ENCODE measurements at regions of chr10 and their contacts with region 1.

Region 1: GRCh38 chr10:120929166-120929565 is 78.0 kb downstream of the WDR11 start:
- DNase-seq: no peak
- H3K4me3 ChIP-seq: no peak overlapping the region
- H3K27ac ChIP-seq: no peak overlapping the region
- H3K4me1 ChIP-seq: no peaks in the 10 kb centered on the region
- H3K27me3 ChIP-seq: peaks cover 38% of the 10 kb centered on the region
- CTCF ChIP-seq: no peak

Region 2: GRCh38 chr10:120917521-120918250 is 11.5 kb before region 1 on chr10:
- CTCF ChIA-PET with region 1: no interaction called
- POLR2A ChIA-PET with region 1: interaction called, 15 read pairs
- intact Hi-C with region 1: no loop called
- DNase-seq: no peak
- H3K4me3 ChIP-seq: no peak overlapping the region
- H3K27ac ChIP-seq: no peak overlapping the region
- H3K4me1 ChIP-seq: no peaks in the 10 kb centered on the region
- H3K27me3 ChIP-seq: no peaks in the 10 kb centered on the region
- CTCF ChIP-seq: no peak

Region 3: GRCh38 chr10:120987359-120987758 is 58.2 kb after region 1 on chr10:
- CTCF ChIA-PET with region 1: no interaction called
- POLR2A ChIA-PET with region 1: no interaction called
- intact Hi-C with region 1: no loop called
- DNase-seq: no peak
- H3K4me3 ChIP-seq: no peak overlapping the region
- H3K27ac ChIP-seq: no peak overlapping the region
- H3K4me1 ChIP-seq: no peaks in the 10 kb centered on the region
- H3K27me3 ChIP-seq: no peaks in the 10 kb centered on the region
- CTCF ChIP-seq: no peak

Measured in PC-9 (cell line).